ENCODE measurements at regions of chr20 and their contacts with region 1.

Region 1: GRCh38 chr20:2671977-2672376 is 8.0 kb upstream of the IDH3B start:
- DNase-seq: no peak
- H3K4me3 ChIP-seq: no peak overlapping the region
- H3K27ac ChIP-seq: no peak overlapping the region
- H3K4me1 ChIP-seq: no peaks in the 10 kb centered on the region
- H3K27me3 ChIP-seq: peaks cover under 1% of the 10 kb centered on the region; the same call in 1 of the 2 replicates
- CTCF ChIP-seq: no peak; the same call in 1 of the 2 replicates

Region 2: GRCh38 chr20:2206957-2207769 is 464.8 kb before region 1 on chr20:
- CTCF ChIA-PET with region 1: interaction called, 17 read pairs
- POLR2A ChIA-PET with region 1: no interaction called
- intact Hi-C with region 1: no loop called
- DNase-seq: peak in 1 of 2 experiments; percentile 60
- H3K4me3 ChIP-seq: no peak overlapping the region
- H3K27ac ChIP-seq: no peak overlapping the region
- H3K4me1 ChIP-seq: no peaks in the 10 kb centered on the region
- H3K27me3 ChIP-seq: peaks cover 26% of the 10 kb centered on the region
- CTCF ChIP-seq: 0 out of 2 replicates have a peak, but pooled peaks have one; percentile 28

Region 3: GRCh38 chr20:2349818-2350508 is 322.0 kb before region 1 on chr20:
- CTCF ChIA-PET with region 1: no interaction called
- POLR2A ChIA-PET with region 1: no interaction called
- intact Hi-C with region 1: loop called (anchors 2 kb)
- DNase-seq: peak; percentile 24 to 79
- H3K4me3 ChIP-seq: no peak overlapping the region
- H3K27ac ChIP-seq: no peak overlapping the region
- H3K4me1 ChIP-seq: peaks cover 22% of the 10 kb centered on the region
- H3K27me3 ChIP-seq: no peaks in the 10 kb centered on the region
- CTCF ChIP-seq: no peak

Region 4: DNA sequence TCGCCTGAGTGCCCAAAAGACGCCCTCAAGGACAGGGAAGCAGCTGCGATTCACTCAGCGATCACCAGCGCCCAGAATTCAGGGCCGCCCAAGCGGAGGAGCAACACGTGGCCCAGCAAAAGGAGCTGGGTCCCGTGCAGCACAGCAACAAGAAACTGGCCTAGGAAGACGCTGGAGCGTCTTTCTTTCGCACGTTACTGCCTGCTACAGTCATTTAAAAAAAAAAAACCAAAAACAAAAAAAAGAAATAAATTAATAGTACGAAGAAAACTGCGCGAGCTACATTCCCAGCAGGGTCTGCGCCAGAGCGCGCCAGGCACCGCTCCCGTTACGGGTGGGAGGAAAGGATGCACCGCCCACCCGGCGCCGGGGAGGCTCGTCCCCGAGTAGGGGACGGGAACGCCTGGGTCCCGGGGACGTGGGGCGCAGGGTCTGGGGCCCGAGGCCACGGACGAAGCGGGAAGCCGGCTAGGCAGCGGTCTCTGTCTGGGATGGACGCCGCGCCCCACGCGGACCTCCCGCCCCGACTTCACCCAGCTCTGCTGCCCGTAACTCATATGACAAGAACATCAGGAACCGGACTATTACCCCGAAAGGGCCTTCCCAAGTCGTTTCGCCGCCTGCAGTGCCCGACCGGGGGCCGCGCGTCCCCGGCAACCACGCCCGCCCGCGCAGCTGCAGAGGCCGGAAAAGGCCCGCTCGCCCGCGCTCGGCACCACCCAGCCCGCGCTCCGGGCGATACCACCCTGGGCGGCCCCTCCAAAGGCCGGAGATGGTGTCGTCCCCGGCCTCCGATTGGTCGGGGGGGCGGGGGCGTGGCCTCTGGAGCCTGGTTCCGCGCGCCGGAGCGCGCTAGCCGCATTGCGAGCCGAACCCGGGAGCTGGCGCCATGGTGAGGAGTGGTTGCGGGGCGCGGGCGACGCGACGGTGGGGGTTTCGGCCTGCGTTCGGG is 19.9 kb before region 1 on chr20 and contains the start of gene NOP56:
- CTCF ChIA-PET with region 1: no interaction called
- POLR2A ChIA-PET with region 1: interaction called, 27 read pairs
- intact Hi-C with region 1: no loop called
- DNase-seq: peak; percentile 74 to 98
- H3K4me3 ChIP-seq: peak within 1 kb of the TSS; percentile 94
- H3K27ac ChIP-seq: peak within 1 kb of the TSS; percentile 64
- H3K4me1 ChIP-seq: peaks cover 22% of the 10 kb centered on the region
- H3K27me3 ChIP-seq: no peaks in the 10 kb centered on the region
- CTCF ChIP-seq: no peak
- total RNA-seq, gene NOP56: 194 and 210 TPM in 2 replicates

Measured in PC-9 (cell line).